ENCODE measurements at regions of chr1 and their contacts with region 1.

Region 1: DNA sequence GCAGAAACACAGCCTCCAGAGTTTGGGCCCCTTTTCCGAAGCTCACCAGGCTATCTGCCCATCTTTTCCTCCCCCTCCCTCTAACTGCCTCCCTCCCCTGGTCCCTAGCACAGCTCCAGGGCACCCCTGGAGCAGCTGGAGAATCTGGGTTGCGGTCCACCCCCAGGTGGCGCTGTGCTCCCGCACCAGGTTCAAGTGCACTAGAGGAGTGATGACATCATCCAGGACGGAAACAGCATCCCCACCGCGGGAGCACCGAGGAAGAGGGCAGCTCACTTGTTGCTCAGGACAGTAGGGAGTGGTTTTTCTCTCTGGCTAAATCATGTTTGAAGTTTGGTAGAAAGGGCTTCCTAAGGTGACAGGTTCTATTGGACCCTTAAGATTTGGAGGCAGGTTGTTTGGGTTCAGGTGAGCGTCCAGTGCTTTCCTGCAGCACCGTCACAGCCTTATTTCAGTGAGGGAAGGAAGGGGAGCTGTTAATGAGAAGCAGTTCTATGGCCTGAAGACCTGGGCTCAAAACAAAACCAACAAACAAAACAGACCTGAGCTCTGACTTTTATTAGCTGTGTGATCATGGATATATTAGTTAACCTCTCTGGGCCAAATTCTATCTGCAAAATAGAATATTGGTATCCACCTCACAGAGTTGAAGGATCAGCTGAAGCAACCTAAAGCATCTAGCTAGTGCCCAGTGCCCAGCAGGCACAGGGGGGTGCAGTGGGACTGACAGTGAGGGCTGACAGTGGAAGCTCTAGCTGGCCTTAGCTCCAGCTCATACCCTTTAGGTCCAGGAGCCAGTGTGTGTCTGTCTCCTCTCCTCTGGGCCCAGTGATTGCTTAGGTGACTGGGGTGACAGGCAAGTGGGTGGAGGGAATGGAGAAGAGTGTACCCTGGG is 7.5 kb downstream of the SHISA4 start:
- DNase-seq: peak; percentile 90 to 94 (median 92)
- ATAC-seq: peak; percentile 77 to 88 (median 84)
- H3K4me3 ChIP-seq: no peak overlapping the region
- H3K27ac ChIP-seq: peak overlapping the region in 11 of 12 donors; percentile 33 to 83 (median 80)
- H3K4me1 ChIP-seq: peaks cover 0 to 36% (median 9%) of the 10 kb centered on the region in 12 donors
- H3K27me3 ChIP-seq: no peaks in the 10 kb centered on the region
- CTCF ChIP-seq: peak; percentile 84 to 96 (median 94)
- POLR2A ChIP-seq: no peak

Region 2: GRCh38 chr1:201946224-201946908 is 50.2 kb after region 1 on chr1 and contains the start of gene LMOD1:
- intact Hi-C with region 1: loop called in 2 of 10 experiments (anchors 5 to 10 kb)
- DNase-seq: peak; percentile 83 to 89 (median 85)
- ATAC-seq: peak; percentile 91 to 96 (median 93)
- H3K4me3 ChIP-seq: peak within 1 kb of the TSS; percentile 26 to 81 (median 54)
- H3K27ac ChIP-seq: peak within 1 kb of the TSS; percentile 8 to 89 (median 62)
- H3K4me1 ChIP-seq: peaks cover 0 to 20% (median 4%) of the 10 kb centered on the region in 12 donors
- H3K27me3 ChIP-seq: peaks cover 0 to 35% (median 0%) of the 10 kb centered on the region in 9 donors
- CTCF ChIP-seq: no peak
- POLR2A ChIP-seq: peak in 1 of 2 donors; percentile 59
- total RNA-seq, gene LMOD1: 4.6 to 24.9 (median 10.0) TPM

Region 3: GRCh38 chr1:201955009-201955728 is 59.0 kb after region 1 on chr1 and contains the start of gene TIMM17A:
- intact Hi-C with region 1: loop called in 4 of 10 experiments (anchors 2 to 5 kb)
- DNase-seq: peak; percentile 96 to 98 (median 97)
- ATAC-seq: peak; percentile 100
- H3K4me3 ChIP-seq: peak within 1 kb of the TSS; percentile 64 to 95 (median 78)
- H3K27ac ChIP-seq: peak within 1 kb of the TSS; percentile 68 to 91 (median 81)
- H3K4me1 ChIP-seq: peaks cover 0 to 20% (median 11%) of the 10 kb centered on the region in 12 donors
- H3K27me3 ChIP-seq: no peaks in the 10 kb centered on the region
- CTCF ChIP-seq: peak in 1 of 12 donors; percentile 16
- POLR2A ChIP-seq: peak; percentile 59 to 82
- total RNA-seq, gene TIMM17A: 31.7 to 120 (median 86.0) TPM

Region 4: GRCh38 chr1:201970334-201971159 is 74.4 kb after region 1 on chr1:
- intact Hi-C with region 1: loop called (anchors 1 to 5 kb)
- DNase-seq: no peak
- ATAC-seq: peak in 2 of 4 donors; percentile 36 to 37
- H3K4me3 ChIP-seq: no peak overlapping the region
- H3K27ac ChIP-seq: no peak overlapping the region
- H3K4me1 ChIP-seq: peaks cover 0 to 14% (median 5%) of the 10 kb centered on the region in 12 donors
- H3K27me3 ChIP-seq: no peaks in the 10 kb centered on the region
- CTCF ChIP-seq: no peak
- POLR2A ChIP-seq: no peak

Region 5: DNA sequence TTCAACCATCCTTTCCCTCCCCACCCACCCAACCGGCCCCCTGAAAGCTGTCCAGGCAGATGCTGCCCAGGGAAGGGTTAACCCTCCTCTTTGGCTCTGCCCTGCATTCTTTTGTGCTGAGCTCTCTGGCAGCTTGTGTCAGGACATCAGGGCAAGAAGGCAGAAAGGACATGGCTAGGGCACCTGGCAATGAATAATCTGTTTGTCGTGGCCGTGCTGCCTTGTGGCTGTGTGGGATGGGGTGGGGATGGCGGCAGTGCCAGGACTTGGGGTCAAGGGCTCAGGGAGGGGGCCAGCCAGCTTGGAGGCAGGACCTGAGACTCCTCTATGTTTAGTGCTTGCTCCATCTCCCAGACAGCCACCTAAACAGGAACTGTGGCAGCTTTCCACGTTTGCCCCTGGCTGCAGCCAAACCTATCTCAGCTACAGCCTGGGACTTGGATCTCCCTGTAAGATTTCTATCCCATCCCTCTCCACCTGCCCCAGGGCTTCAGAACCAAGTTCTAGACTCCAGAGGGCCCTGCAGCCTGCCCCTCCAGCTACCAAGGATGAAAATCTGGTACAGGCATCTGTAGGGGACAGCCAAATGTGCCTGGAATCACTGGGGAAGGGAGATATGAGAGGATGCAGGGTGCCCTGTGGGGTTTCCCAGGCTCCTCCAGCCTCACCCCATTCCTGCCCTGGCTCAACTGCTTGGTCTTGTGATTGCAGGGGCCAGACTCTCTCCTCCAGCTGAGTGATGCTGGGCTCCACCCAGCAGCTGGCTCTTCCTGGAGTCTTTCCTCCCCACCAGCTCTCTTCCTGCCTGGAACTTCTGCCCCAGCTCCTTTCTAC is 216.9 kb after region 1 on chr1:
- intact Hi-C with region 1: loop called in 1 of 10 experiments (anchors 10 kb)
- DNase-seq: peak in 4 of 5 donors; percentile 59 to 84 (median 62)
- ATAC-seq: peak; percentile 78 to 79 (median 78)
- H3K4me3 ChIP-seq: no peak overlapping the region
- H3K27ac ChIP-seq: peak overlapping the region; percentile 27 to 88 (median 71)
- H3K4me1 ChIP-seq: peaks cover 0 to 31% (median 19%) of the 10 kb centered on the region in 12 donors
- H3K27me3 ChIP-seq: no peaks in the 10 kb centered on the region
- CTCF ChIP-seq: no peak
- POLR2A ChIP-seq: no peak

Region 6: GRCh38 chr1:202122639-202123335 is 226.6 kb after region 1 on chr1 and contains the start of gene GPR37L1:
- intact Hi-C with region 1: loop called in 2 of 10 experiments (anchors 10 kb)
- DNase-seq: peak in 3 of 5 donors; percentile 39 to 69 (median 60)
- ATAC-seq: peak; percentile 23 to 77 (median 70)
- H3K4me3 ChIP-seq: no peak within 1 kb of the TSS
- H3K27ac ChIP-seq: no peak within 1 kb of the TSS
- H3K4me1 ChIP-seq: peaks cover 0 to 7% (median 0%) of the 10 kb centered on the region in 12 donors
- H3K27me3 ChIP-seq: peaks cover 0 to 2% (median 0%) of the 10 kb centered on the region in 9 donors
- CTCF ChIP-seq: peak in 10 of 12 donors; percentile 14 to 64 (median 41)
- POLR2A ChIP-seq: no peak
- total RNA-seq, gene GPR37L1: 0.05 TPM in 1 of 9 donors, not detected in the others

Region 7: DNA sequence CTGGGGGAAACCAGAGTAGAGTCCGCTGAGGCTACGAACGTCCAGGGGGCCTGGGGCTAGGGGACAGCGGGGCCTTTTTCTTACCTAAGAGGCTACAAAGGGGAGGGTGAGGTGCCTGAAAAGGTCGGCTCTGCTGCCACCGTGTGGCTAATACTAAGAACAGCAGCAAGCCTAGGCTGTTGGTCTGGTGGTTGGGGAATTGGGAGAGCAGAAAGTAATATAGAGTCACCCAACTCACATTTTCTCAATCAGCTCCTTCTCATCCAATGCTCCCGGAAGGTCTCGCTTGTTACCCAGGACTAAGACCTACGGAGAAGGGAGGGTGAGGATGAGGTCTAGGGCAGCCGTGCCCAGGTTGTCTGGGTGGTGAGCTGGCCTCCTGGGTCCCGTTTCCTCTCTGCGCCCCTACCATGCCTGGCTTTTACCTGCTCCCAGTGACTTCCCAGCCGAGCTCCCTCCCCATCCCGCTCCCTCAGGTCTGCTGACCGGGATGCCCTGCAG is 239.1 kb after region 1 on chr1:
- intact Hi-C with region 1: loop called in 3 of 10 experiments (anchors 10 kb)
- DNase-seq: peak in 3 of 5 donors; percentile 48 to 57 (median 50)
- ATAC-seq: peak; percentile 42 to 71 (median 56)
- H3K4me3 ChIP-seq: no peak overlapping the region
- H3K27ac ChIP-seq: peak overlapping the region in 2 of 12 donors; percentile 28 to 66
- H3K4me1 ChIP-seq: peaks cover 4 to 30% (median 19%) of the 10 kb centered on the region in 12 donors
- H3K27me3 ChIP-seq: no peaks in the 10 kb centered on the region
- CTCF ChIP-seq: peak; percentile 77 to 92 (median 85)
- POLR2A ChIP-seq: no peak

Measured in heart left ventricle (tissue), 16 donors.